ENCODE measurements at regions of chr5 and their contacts with region 1.

Region 1: DNA sequence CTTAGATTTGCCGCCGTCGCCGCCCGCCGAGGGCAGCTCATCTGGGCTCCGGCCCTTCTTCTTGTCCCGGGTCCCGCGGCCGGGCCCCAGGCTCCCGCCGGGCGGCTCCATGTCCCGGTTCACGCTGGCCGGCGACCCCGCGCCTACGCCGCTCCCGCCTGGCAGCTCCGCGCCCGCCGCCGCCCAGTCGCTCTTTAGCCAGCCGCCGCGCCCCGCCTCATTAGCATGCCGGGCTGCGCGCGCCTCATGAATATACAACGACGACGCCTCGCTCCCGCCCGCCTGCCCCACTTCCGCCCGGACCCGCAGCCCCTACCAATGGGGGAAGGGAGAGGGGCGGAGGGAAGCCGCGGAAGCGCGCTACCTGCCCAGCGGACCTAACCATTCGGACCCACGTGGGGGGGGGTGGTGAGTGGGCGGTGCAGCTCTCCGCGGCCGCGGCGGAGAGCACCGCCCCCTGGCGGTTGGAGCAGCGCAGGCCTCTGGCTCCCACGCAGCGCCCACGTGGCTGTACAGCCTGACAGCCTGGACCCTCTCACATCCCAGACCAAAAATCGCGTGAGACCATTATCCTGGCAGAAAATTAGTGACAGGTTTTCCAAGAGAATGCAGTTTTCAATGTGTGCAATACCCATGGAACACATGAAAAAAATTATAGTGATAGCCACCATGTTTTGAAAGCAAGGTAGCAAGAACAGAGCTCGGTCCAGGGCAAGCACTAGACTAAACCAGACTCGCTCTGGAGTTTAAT is at the start of gene DIAPH1:
- DNase-seq: peak; percentile 97 to 98
- ATAC-seq: peak; percentile 71 to 76
- H3K4me3 ChIP-seq: peak within 1 kb of the TSS; percentile 64 to 100 (median 89)
- H3K27ac ChIP-seq: peak within 1 kb of the TSS; percentile 89 to 100 (median 99)
- H3K4me1 ChIP-seq: peaks cover 36 to 37% of the 10 kb centered on the region in 2 donors
- H3K27me3 ChIP-seq: no peaks in the 10 kb centered on the region
- CTCF ChIP-seq: peak; percentile 100
- POLR2A ChIP-seq: peak; percentile 99
- total RNA-seq, gene DIAPH1: 98.3 to 324 (median 214) TPM

Region 2: DNA sequence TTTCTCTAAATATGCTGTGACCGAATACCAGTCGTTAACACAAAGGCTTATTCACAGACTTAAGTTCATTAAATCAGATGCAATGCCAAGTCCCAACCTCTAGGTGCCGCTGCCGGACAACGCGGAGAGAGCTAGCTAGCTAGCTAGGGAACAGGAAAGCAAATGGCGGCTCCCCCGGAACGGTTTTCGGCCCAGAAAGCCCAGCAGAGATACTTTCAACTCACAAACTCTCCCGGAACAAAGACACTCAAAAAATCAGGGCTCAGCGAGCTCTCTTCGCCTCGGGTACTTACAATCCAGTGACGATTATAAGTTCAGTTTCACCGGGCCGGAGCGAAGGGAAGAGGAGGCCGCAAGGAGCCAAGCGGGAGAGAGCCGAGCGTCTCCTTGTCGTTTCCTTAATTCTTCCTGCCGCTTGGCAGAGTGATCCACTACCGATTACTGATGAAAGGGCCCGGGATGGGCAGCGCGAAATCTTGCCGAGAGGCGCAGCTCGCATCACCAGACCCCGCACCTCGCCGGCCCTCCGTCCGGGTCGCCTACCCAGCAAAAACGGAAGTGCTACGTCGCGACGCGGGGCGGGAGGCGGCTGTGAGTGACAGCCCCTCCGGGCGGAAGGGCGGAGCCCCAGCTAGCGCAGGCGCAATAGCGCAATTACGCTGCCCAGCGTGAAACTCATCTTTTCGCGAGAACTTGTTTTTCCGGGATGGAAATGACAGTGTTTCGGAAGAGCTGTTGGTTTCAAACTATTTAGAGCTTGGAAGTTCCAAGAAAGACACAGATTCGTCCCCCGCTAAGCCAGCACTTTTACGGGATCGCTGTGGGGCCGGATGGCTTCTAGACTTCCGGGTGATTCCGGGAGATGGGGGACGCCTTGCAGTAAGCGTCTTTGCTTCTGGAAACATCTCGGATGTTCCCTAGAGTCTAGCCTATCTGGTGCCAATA is 298.5 kb before region 1 on chr5 and contains the start of gene TAF7:
- in situ Hi-C with region 1: no loop called
- intact Hi-C with region 1: loop called (anchors 5 kb)
- DNase-seq: peak; percentile 82 to 88
- ATAC-seq: peak; percentile 94 to 97
- H3K4me3 ChIP-seq: peak within 1 kb of the TSS; percentile 62 to 86 (median 84)
- H3K27ac ChIP-seq: peak within 1 kb of the TSS; percentile 85 to 97 (median 94)
- H3K4me1 ChIP-seq: peaks cover 32 to 35% of the 10 kb centered on the region in 2 donors
- H3K27me3 ChIP-seq: no peaks in the 10 kb centered on the region
- CTCF ChIP-seq: peak; percentile 79 to 95 (median 88)
- POLR2A ChIP-seq: peak; percentile 99 to 100
- total RNA-seq, gene TAF7: 60.9 to 91.2 (median 79.8) TPM

Region 3: DNA sequence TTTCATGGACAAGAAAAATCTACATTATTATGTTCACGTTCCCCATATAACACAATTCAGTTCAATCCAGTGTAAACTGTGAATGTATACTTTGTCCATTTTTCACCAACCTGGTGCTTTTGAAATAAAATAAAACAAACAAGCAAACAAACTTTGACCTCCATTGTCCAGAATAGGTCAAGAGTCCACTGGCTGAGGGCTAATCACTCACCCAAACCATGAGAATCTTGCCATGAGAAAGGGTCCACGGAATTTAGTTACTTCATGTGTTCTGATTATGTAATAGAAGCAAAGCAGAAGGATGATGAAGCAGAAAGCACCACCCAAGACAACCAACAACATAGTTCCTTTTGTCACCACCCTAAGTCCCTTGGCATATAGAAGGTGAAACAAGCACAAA is 28.9 kb before region 1 on chr5:
- in situ Hi-C with region 1: loop called in 2 of 4 experiments (anchors 5 kb)
- intact Hi-C with region 1: loop called (anchors 1 kb)
- DNase-seq: no peak
- ATAC-seq: no peak
- H3K4me3 ChIP-seq: no peak overlapping the region
- H3K27ac ChIP-seq: peak overlapping the region in 2 of 4 donors; percentile 37 to 94
- H3K4me1 ChIP-seq: peaks cover 23 to 32% of the 10 kb centered on the region in 2 donors
- H3K27me3 ChIP-seq: no peaks in the 10 kb centered on the region
- CTCF ChIP-seq: no peak
- POLR2A ChIP-seq: no peak

Region 4: DNA sequence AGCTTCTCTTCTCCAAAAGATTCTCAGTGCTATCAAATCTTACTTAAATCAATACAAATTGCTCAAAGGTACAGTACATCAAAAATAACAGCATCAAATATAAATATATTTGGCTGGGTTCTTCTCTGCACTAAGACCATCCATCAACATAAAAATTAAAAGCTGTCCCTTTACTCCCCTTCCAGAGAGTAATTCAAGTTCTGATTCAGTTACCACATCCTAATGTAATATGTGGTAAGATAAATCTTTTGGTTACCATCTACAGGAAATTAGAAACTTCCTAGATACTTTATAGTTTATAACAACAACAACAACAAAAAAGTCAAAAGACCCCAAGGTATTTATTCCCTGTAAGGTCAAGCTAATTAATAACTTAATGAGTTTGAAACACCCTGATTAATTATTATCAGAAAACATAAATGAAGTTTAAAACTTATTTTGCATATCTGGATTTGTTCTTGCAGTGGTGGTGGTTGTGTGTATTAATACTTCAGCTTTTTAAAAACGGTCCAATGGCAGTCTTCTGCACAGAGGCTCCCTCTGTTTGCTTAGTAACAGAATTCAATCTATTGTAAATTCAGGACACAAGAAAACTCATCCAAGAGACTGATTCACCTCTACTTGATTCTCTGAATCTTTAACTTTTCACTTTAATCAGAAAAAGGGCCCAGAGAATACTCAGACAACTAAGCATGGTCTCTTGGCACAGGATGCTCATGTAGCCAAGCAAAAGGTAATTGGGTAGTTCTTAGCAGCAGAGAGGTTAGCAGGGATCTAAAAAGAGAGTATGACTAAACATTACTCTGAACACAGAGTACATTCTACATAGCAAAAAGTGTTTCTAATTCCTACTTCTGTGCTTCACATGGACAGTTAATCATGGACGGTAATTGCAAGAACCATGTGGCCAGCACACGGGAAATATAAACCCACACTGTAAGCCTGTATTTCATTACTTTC is 20.3 kb before region 1 on chr5:
- in situ Hi-C with region 1: no loop called
- intact Hi-C with region 1: loop called (anchors 1 kb)
- DNase-seq: no peak
- ATAC-seq: peak; percentile 97
- H3K4me3 ChIP-seq: peak overlapping the region in 2 of 4 donors; percentile 0 to 16
- H3K27ac ChIP-seq: peak overlapping the region; percentile 89 to 94 (median 91)
- H3K4me1 ChIP-seq: peaks cover 78 to 83% of the 10 kb centered on the region in 2 donors
- H3K27me3 ChIP-seq: no peaks in the 10 kb centered on the region
- CTCF ChIP-seq: no peak
- POLR2A ChIP-seq: no peak

Region 5: DNA sequence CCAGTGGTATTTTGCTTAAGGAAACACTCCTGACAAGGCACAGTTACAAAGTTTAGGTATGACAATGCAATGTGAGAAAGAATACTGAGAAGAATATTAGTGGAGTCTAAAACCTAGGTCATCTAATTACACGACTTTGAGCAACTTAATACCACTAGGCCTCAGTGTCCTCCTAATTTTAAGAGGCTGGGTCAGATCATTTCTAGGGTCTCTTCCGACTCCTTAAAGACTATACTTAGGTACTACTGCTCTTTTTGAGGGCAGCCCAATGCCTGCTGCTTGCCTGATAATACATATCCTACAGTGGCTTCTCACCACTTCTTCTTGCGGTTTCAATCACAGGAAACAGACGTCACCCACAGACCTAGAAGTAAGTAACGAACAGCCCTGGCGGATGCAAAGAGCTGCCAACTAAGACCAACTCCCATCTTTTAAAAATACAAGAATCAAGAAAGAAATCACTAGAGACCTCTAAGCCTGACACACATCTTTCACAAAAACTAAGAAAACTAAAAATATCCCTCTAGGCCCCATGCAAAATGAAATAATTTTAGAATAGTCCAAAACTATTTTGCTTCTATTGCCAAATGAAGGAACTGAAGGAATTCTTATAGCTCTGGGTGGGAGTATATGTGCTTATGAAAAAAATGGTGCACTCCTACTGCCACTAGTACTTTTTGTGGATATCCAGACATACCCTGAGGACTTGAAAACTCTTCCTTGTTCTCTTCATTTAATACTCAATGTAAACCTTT is 13.3 kb before region 1 on chr5:
- in situ Hi-C with region 1: no loop called
- intact Hi-C with region 1: loop called (anchors 1 kb)
- DNase-seq: peak; percentile 23 to 42
- ATAC-seq: peak in 1 of 2 donors; percentile 17
- H3K4me3 ChIP-seq: no peak overlapping the region
- H3K27ac ChIP-seq: peak overlapping the region; percentile 89 to 94 (median 91)
- H3K4me1 ChIP-seq: peaks cover 85 to 92% of the 10 kb centered on the region in 2 donors
- H3K27me3 ChIP-seq: no peaks in the 10 kb centered on the region
- CTCF ChIP-seq: no peak
- POLR2A ChIP-seq: no peak

Region 6: GRCh38 chr5:141636413-141637122 is 17.6 kb after region 1 on chr5 and contains the starts of genes HDAC3 and RELL2:
- in situ Hi-C with region 1: no loop called
- intact Hi-C with region 1: loop called (anchors 1 kb)
- DNase-seq: peak; percentile 89 to 91
- ATAC-seq: peak; percentile 90 to 93
- H3K4me3 ChIP-seq: peak within 1 kb of the TSS; percentile 64 to 91 (median 88)
- H3K27ac ChIP-seq: peak within 1 kb of the TSS; percentile 74 to 92 (median 86)
- H3K4me1 ChIP-seq: peaks cover 22 to 26% of the 10 kb centered on the region in 2 donors
- H3K27me3 ChIP-seq: peaks cover 5 to 16% (median 12%) of the 10 kb centered on the region in 3 donors
- CTCF ChIP-seq: no peak
- POLR2A ChIP-seq: peak; percentile 93 to 95
- total RNA-seq, gene HDAC3: 29.8 to 40.7 (median 35.7) TPM
- total RNA-seq, gene RELL2: 0.16 to 1.1 TPM in 2 of 4 donors, not detected in the others

Region 7: GRCh38 chr5:143041972-143042770 is 1423.2 kb after region 1 on chr5:
- in situ Hi-C with region 1: no loop called
- intact Hi-C with region 1: loop called (anchors 5 kb)
- DNase-seq: peak; percentile 81 to 89
- ATAC-seq: peak; percentile 92 to 93
- H3K4me3 ChIP-seq: peak overlapping the region in 1 of 4 donors; percentile 2
- H3K27ac ChIP-seq: peak overlapping the region; percentile 88 to 91 (median 89)
- H3K4me1 ChIP-seq: peaks cover 15 to 24% of the 10 kb centered on the region in 2 donors
- H3K27me3 ChIP-seq: no peaks in the 10 kb centered on the region
- CTCF ChIP-seq: no peak
- POLR2A ChIP-seq: peak; percentile 50 to 55

Measured in gastrocnemius medialis (tissue), 4 donors.